Transverse colon (tissue), 4 donors: ENCODE measurements at regions of chr14 and their contacts with region 1.

Region 1: GRCh38 chr14:82126006-82126405 is 592.4 kb upstream of the SEL1L start:
- DNase-seq: no peak
- H3K4me3 ChIP-seq: no peak overlapping the region
- H3K27ac ChIP-seq: no peak overlapping the region
- H3K4me1 ChIP-seq: no peaks in the 10 kb centered on the region
- H3K27me3 ChIP-seq: no peaks in the 10 kb centered on the region
- CTCF ChIP-seq: no peak
- EP300 ChIP-seq: no peak
- POLR2A ChIP-seq: no peak

Region 2: GRCh38 chr14:82104013-82104412 is 22.0 kb before region 1 on chr14:
- in situ Hi-C with region 1: no loop called
- intact Hi-C with region 1: loop called (anchors 1 kb)
- DNase-seq: no peak
- H3K4me3 ChIP-seq: no peak overlapping the region
- H3K27ac ChIP-seq: no peak overlapping the region
- H3K4me1 ChIP-seq: no peaks in the 10 kb centered on the region
- H3K27me3 ChIP-seq: no peaks in the 10 kb centered on the region
- CTCF ChIP-seq: no peak
- EP300 ChIP-seq: no peak
- POLR2A ChIP-seq: no peak